GM12878 (cell line): ENCODE measurements at regions of chr6 and their contacts with region 1.

Region 1: DNA sequence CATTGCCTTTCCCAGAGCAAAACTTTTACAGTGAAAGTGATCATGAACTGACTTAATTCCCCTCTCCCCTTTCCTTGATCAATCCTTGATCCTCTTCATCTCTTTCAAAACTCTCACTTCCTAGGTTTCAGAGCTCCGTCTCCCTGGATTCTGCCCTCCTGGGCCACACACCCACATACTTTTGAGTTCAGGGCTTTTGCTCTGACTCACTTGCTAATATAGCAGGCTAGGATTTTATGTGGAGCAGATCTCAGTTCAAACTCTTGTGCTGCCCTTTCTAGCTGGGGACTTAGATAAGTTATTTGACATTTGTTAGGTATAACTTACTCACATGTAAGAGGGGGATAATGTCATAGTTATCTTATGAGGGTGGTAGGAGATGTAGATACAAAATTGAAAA is 109.1 kb upstream of the MLIP start:
- DNase-seq: no peak
- ATAC-seq: no peak
- H3K4me3 ChIP-seq: no peak overlapping the region
- H3K27ac ChIP-seq: no peak overlapping the region
- H3K4me1 ChIP-seq: no peaks in the 10 kb centered on the region
- H3K27me3 ChIP-seq: no peaks in the 10 kb centered on the region
- CTCF ChIP-seq: no peak
- EP300 ChIP-seq: no peak
- POLR2A ChIP-seq: no peak
- RAD21 ChIP-seq: no peak

Region 2: GRCh38 chr6:53701333-53702218 is 300.5 kb before region 1 on chr6:
- CTCF ChIA-PET with region 1: no interaction called
- POLR2A ChIA-PET with region 1: no interaction called
- RAD21 ChIA-PET with region 1: no interaction called
- SMC1A ChIA-PET with region 1: no interaction called
- in situ Hi-C with region 1: no loop called
- intact Hi-C with region 1: no loop called
- DNase-seq: no peak
- ATAC-seq: no peak
- H3K4me3 ChIP-seq: no peak overlapping the region
- H3K27ac ChIP-seq: no peak overlapping the region
- H3K4me1 ChIP-seq: no peaks in the 10 kb centered on the region
- H3K27me3 ChIP-seq: no peaks in the 10 kb centered on the region; a peak in 1 of 4 replicates
- CTCF ChIP-seq: no peak
- EP300 ChIP-seq: no peak
- POLR2A ChIP-seq: no peak
- RAD21 ChIP-seq: no peak

Region 3: DNA sequence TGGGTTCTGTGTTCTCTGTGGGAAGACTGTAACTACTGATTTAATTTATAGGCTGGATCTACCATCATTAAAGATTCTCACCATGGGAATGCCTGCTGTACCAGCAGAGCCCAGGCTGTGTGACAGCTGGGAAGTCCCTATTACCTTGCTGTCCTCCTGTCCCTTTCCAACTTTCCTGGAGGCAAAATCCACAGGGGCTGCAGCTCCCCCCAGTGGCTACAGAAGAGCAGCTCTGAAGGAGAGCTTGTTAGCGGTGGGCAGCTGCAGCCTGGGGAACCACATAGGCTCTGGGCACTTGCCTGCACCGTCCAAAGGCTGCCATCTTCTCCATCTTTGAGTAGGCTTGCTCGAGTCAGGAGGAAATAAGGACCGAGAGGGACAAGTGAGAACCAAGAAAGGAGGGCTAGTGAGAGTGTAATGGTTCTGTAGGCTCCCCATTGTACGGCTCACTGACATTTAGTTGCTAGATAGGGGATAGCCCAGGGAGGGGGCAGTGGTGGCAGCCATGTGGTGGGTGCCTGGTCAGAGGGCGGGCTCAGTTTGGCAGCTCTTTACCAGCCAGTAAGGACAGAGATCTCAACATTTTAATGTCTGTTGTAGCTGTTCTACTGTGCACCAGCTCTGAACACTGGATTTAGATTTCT is 45.9 kb before region 1 on chr6:
- CTCF ChIA-PET with region 1: no interaction called
- POLR2A ChIA-PET with region 1: no interaction called
- RAD21 ChIA-PET with region 1: no interaction called
- SMC1A ChIA-PET with region 1: no interaction called
- in situ Hi-C with region 1: no loop called
- intact Hi-C with region 1: loop called (anchors 1 kb)
- DNase-seq: peak; percentile 8
- ATAC-seq: peak; percentile 94
- H3K4me3 ChIP-seq: no peak overlapping the region
- H3K27ac ChIP-seq: no peak overlapping the region
- H3K4me1 ChIP-seq: no peaks in the 10 kb centered on the region
- H3K27me3 ChIP-seq: no peaks in the 10 kb centered on the region; a peak in 1 of 4 replicates
- CTCF ChIP-seq: peak; percentile 36 to 58 (median 54); a peak in 5 of 6 replicates
- EP300 ChIP-seq: no peak
- POLR2A ChIP-seq: no peak
- RAD21 ChIP-seq: 0 out of 2 replicates have a peak, but pooled peaks have one; percentile 10

Region 4: GRCh38 chr6:54053881-54054391 is 51.8 kb after region 1 on chr6:
- CTCF ChIA-PET with region 1: no interaction called
- POLR2A ChIA-PET with region 1: no interaction called
- RAD21 ChIA-PET with region 1: no interaction called
- SMC1A ChIA-PET with region 1: no interaction called
- in situ Hi-C with region 1: no loop called
- intact Hi-C with region 1: no loop called
- DNase-seq: no peak
- ATAC-seq: no peak
- H3K4me3 ChIP-seq: no peak overlapping the region
- H3K27ac ChIP-seq: no peak overlapping the region
- H3K4me1 ChIP-seq: no peaks in the 10 kb centered on the region
- H3K27me3 ChIP-seq: no peaks in the 10 kb centered on the region
- CTCF ChIP-seq: no peak
- EP300 ChIP-seq: no peak
- POLR2A ChIP-seq: no peak
- RAD21 ChIP-seq: no peak